Activated CD8-positive, alpha-beta T cell treated with anti-CD3 and anti-CD28 coated beads for 36 hours (primary cell): ENCODE measurements at regions of chr11 and their contacts with region 1.

Region 1: DNA sequence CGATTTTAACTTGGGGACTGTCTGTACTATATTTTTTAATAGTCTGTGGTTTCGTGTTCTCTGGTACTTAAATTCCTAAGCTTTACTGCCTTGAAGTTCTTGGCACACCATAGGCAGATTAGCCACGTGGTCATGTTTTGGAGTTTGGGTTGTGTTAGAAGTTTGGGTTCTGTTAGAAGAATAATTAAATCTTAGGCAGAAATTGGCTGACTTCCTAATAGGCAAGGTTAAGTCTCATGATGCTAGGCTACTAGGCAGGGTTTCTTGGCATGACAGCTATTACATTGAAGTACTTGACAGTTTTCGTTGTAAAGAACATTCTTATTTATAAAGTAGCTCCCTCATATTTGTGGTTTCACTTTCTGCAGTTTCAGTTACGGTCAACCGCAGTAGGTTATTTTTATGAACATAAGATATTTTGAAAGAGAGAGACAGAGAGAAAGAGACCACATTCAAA is 30.0 kb upstream of the MMP7 start:
- DNase-seq: peak; percentile 33
- ATAC-seq: peak; percentile 47
- H3K4me3 Mint-ChIP-seq: peak overlapping the region; percentile 50
- H3K27ac Mint-ChIP-seq: peak overlapping the region; percentile 77
- H3K4me1 Mint-ChIP-seq: peaks cover 46% of the 10 kb centered on the region
- H3K27me3 Mint-ChIP-seq: no peaks in the 10 kb centered on the region
- CTCF ChIP-seq: no peak

Region 2: GRCh38 chr11:102580185-102580951 is 19.8 kb after region 1 on chr11:
- CTCF ChIA-PET with region 1: no interaction called
- POLR2A ChIA-PET with region 1: no interaction called
- intact Hi-C with region 1: no loop called
- DNase-seq: no peak
- ATAC-seq: peak; percentile 62
- H3K4me3 Mint-ChIP-seq: no peak overlapping the region
- H3K27ac Mint-ChIP-seq: peak overlapping the region; percentile 40
- H3K4me1 Mint-ChIP-seq: peaks cover 28% of the 10 kb centered on the region
- H3K27me3 Mint-ChIP-seq: no peaks in the 10 kb centered on the region
- CTCF ChIP-seq: no peak

Region 3: GRCh38 chr11:102599642-102600261 is 39.2 kb after region 1 on chr11:
- CTCF ChIA-PET with region 1: interaction called, 4 read pairs
- POLR2A ChIA-PET with region 1: no interaction called
- intact Hi-C with region 1: loop called (anchors 5 kb)
- DNase-seq: peak; percentile 38
- ATAC-seq: peak; percentile 97
- H3K4me3 Mint-ChIP-seq: no peak overlapping the region
- H3K27ac Mint-ChIP-seq: peak overlapping the region; percentile 48
- H3K4me1 Mint-ChIP-seq: peaks cover 26% of the 10 kb centered on the region
- H3K27me3 Mint-ChIP-seq: no peaks in the 10 kb centered on the region
- CTCF ChIP-seq: no peak